Caco-2 (cell line): ENCODE measurements at regions of chr18 and their contacts with region 1.

Region 1: DNA sequence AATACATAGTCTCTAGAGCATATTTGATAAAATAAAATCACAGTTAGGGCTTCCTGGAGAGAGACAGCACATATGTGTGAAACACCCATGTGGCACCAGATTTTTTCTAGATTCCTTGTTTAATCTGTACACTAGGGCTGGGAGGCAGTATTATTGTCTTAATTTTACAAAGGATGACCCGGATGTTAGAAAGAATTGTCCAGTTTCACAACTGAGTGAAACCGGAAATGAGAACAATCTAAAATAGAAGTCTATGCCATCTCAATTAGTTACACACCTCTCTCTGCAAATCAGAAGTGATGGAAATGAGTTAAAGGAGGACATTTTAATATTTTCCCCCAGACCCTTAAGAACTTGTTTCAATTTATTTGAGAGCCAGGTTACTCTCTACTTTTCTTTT is 463.7 kb upstream of the DSEL start:
- DNase-seq: no peak
- H3K4me3 ChIP-seq: no peak overlapping the region
- H3K4me3 Mint-ChIP-seq: no peak overlapping the region
- H3K27ac Mint-ChIP-seq: no peak overlapping the region
- H3K4me1 ChIP-seq: no peaks in the 10 kb centered on the region
- H3K4me1 Mint-ChIP-seq: peaks cover 6% of the 10 kb centered on the region
- H3K27me3 ChIP-seq: no peaks in the 10 kb centered on the region
- H3K27me3 Mint-ChIP-seq: no peaks in the 10 kb centered on the region
- CTCF ChIP-seq: no peak

Region 2: DNA sequence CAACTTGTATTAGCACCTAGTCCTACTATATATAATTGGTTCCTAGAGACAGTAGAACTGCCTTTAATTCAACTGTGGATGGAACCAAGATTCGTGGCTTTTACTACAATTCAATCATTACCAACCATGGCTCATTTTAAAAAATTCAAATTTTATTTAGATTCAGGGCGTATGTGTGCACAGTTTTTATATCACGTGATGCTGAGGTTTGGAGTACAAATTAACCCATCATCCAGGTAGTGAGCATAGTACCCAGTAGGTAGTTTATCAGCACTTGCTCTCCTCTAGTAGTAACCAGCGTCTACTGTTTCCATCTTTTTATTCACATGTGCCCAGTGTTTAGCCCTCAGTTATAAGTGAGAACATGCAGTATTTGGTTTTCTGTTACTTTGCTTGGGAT is 95.8 kb before region 1 on chr18:
- CTCF ChIA-PET with region 1: interaction called, 14 read pairs
- POLR2A ChIA-PET with region 1: no interaction called
- intact Hi-C with region 1: no loop called
- DNase-seq: no peak
- H3K4me3 ChIP-seq: no peak overlapping the region
- H3K4me3 Mint-ChIP-seq: no peak overlapping the region
- H3K27ac Mint-ChIP-seq: no peak overlapping the region
- H3K4me1 ChIP-seq: no peaks in the 10 kb centered on the region
- H3K4me1 Mint-ChIP-seq: no peaks in the 10 kb centered on the region
- H3K27me3 ChIP-seq: no peaks in the 10 kb centered on the region
- H3K27me3 Mint-ChIP-seq: no peaks in the 10 kb centered on the region
- CTCF ChIP-seq: no peak